ENCODE measurements at regions of chr1 and their contacts with region 1.

Region 1: GRCh38 chr1:50430010-50430405 is 6.8 kb upstream of the DMRTA2 start:
- DNase-seq: no peak
- H3K4me3 Mint-ChIP-seq: no peak overlapping the region
- H3K27ac Mint-ChIP-seq: no peak overlapping the region
- H3K4me1 Mint-ChIP-seq: peaks cover 8% of the 10 kb centered on the region
- H3K27me3 Mint-ChIP-seq: peaks cover 79% of the 10 kb centered on the region

Region 2: GRCh38 chr1:50416553-50417453 is 13.2 kb before region 1 on chr1:
- intact Hi-C with region 1: loop called (anchors 1 kb)
- DNase-seq: no peak
- H3K4me3 Mint-ChIP-seq: no peak overlapping the region
- H3K27ac Mint-ChIP-seq: peak overlapping the region; percentile 61
- H3K4me1 Mint-ChIP-seq: peaks cover 13% of the 10 kb centered on the region
- H3K27me3 Mint-ChIP-seq: peaks cover 73% of the 10 kb centered on the region